Activated CD4-positive, alpha-beta T cell treated with anti-CD3 and anti-CD28 coated beads for 36 hours (primary cell): ENCODE measurements at regions of chr1 and their contacts with region 1.

Region 1: DNA sequence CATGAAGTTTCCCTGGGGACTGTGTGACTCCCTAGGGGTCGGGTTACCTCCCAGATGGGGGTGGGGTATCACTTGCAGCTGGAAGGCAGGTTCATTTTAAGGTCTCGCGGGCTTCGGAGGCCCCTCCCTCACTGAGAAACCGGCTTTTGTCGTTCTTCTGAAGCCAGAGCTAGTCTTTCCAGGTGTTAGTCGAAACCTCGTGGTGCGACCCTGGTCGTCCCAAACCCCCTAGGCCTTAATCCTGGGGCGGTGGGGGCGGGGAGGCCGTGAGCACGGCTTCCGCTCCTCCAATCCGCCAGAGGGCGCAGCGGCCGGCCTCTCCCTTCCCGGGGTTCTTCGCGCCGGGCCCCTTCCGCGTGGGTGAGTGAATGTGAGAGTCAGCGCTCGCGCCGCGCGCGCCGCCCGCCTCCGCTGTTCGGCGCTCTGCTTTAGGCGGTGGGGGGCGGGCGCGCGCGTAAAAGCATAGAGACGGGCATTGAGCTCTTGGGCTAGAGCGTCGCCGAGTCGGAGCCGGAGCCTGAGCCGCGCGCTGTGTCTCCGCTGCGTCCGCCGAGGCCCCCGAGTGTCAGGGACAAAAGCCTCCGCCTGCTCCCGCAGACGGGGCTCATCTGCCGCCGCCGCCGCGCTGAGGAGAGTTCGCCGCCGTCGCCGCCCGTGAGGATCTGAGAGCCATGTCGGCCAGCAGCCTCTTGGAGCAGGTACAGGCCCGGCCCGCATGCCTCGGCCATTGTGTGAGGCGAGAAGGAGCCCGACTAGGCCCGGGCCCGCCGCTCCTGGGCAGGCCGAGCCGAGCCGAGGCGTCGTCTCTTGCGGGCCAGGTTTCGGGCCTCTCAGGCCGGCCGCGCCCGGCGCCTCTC is at the start of gene YTHDF2:
- DNase-seq: peak; percentile 99
- ATAC-seq: peak; percentile 90
- H3K4me3 Mint-ChIP-seq: peak within 1 kb of the TSS; percentile 95
- H3K27ac Mint-ChIP-seq: peak within 1 kb of the TSS; percentile 90
- H3K4me1 Mint-ChIP-seq: peaks cover 31% of the 10 kb centered on the region
- H3K27me3 Mint-ChIP-seq: no peaks in the 10 kb centered on the region
- total RNA-seq, gene YTHDF2: 74.8 to 98.7 TPM

Region 2: GRCh38 chr1:27830621-27831424 is 905.9 kb before region 1 on chr1 and contains the start of gene PPP1R8:
- CTCF ChIA-PET with region 1: no interaction called
- POLR2A ChIA-PET with region 1: no interaction called
- intact Hi-C with region 1: loop called in 1 of 2 experiments (anchors 5 kb)
- DNase-seq: peak; percentile 94
- ATAC-seq: peak; percentile 99
- H3K4me3 Mint-ChIP-seq: peak within 1 kb of the TSS; percentile 94
- H3K27ac Mint-ChIP-seq: peak within 1 kb of the TSS; percentile 94
- H3K4me1 Mint-ChIP-seq: peaks cover 40% of the 10 kb centered on the region
- H3K27me3 Mint-ChIP-seq: no peaks in the 10 kb centered on the region
- total RNA-seq, gene PPP1R8: 49.6 to 65.9 TPM

Region 3: DNA sequence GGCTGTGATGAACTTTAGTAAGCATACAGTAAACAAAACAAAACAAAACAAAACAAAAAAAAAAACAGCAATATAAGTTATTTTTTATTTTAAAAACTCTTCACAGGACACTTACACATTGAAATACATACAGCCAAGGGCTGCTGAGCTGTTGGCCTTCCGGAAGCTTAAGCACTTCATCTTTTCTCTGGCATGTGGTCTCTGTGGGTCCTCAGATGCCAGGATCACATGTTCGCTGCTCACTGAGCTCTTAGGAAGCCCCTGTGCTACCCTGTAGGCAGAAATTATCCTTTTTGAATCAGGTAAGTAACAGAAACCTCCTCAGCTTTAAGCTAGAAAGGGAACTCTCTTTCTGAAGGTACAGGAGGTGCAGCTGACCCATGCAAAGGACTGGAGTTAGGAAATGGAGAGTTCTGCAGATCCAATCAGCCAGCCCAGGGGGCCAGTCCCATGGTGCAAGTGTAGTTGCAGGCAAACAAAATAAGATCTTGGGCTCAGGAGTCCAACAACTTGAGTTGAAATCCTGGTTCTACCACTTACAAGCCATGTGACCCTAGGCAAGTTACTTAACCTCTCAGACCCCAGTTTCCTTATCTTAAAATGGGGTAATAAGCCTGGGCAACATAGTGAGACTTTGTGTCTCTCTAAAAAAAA is 430.2 kb before region 1 on chr1:
- CTCF ChIA-PET with region 1: no interaction called
- POLR2A ChIA-PET with region 1: no interaction called
- intact Hi-C with region 1: no loop called
- DNase-seq: no peak
- ATAC-seq: no peak
- H3K4me3 Mint-ChIP-seq: no peak overlapping the region
- H3K27ac Mint-ChIP-seq: no peak overlapping the region
- H3K4me1 Mint-ChIP-seq: no peaks in the 10 kb centered on the region
- H3K27me3 Mint-ChIP-seq: no peaks in the 10 kb centered on the region

Region 4: DNA sequence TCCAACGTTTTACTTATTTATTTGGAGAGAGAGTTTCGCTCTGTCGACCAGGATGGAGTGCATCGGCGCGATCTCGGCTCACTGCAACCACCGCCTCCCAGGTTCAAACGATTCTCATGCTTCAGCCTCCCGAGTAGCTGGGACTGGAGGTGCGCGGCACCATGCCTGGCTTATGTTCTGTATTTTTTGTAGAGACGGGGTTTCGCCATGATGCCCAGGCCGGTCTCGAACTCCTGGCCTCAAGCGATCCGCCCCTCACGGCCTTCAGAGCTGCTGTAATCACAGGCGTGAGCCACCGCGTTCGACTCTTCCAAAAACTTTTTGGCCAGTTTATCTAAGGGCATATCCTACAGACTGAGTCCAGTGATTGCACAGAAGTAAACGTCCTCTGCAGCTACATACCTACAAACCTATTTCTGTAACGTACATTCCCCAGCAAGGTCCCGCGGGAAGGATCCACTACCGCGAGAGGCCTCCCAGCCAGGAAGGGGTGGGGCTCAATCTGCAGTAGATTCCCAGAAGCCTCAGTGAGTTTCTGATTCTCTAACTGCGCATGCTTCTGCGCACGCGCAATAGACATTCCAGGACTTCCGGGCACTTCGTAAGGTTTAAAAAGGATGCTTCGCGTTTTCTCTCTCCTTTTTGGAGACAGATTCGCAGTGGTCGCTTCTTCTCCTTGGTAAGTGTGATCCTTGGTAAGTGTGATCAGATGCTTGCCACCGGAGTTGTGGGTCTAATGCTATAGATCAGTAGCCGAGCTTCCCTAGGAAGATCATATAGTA is 231.1 kb before region 1 on chr1 and contains the start of gene RCC1:
- CTCF ChIA-PET with region 1: no interaction called
- POLR2A ChIA-PET with region 1: interaction called, 4 read pairs
- intact Hi-C with region 1: loop called in 1 of 2 experiments (anchors 1 kb)
- DNase-seq: peak; percentile 97
- ATAC-seq: peak; percentile 85
- H3K4me3 Mint-ChIP-seq: peak within 1 kb of the TSS; percentile 98
- H3K27ac Mint-ChIP-seq: peak within 1 kb of the TSS; percentile 99
- H3K4me1 Mint-ChIP-seq: peaks cover 26% of the 10 kb centered on the region
- H3K27me3 Mint-ChIP-seq: peaks cover 1% of the 10 kb centered on the region
- total RNA-seq, gene RCC1: 103 to 107 TPM

Region 5: GRCh38 chr1:28552758-28553663 is 183.7 kb before region 1 on chr1 and contains the start of gene TRNAU1AP:
- CTCF ChIA-PET with region 1: no interaction called
- POLR2A ChIA-PET with region 1: interaction called, 6 read pairs
- intact Hi-C with region 1: loop called in 1 of 2 experiments (anchors 1 kb)
- DNase-seq: peak; percentile 99
- ATAC-seq: peak; percentile 94
- H3K4me3 Mint-ChIP-seq: peak within 1 kb of the TSS; percentile 92
- H3K27ac Mint-ChIP-seq: peak within 1 kb of the TSS; percentile 95
- H3K4me1 Mint-ChIP-seq: peaks cover 24% of the 10 kb centered on the region
- H3K27me3 Mint-ChIP-seq: no peaks in the 10 kb centered on the region
- total RNA-seq, gene TRNAU1AP: 50.7 to 60.2 TPM

Region 6: DNA sequence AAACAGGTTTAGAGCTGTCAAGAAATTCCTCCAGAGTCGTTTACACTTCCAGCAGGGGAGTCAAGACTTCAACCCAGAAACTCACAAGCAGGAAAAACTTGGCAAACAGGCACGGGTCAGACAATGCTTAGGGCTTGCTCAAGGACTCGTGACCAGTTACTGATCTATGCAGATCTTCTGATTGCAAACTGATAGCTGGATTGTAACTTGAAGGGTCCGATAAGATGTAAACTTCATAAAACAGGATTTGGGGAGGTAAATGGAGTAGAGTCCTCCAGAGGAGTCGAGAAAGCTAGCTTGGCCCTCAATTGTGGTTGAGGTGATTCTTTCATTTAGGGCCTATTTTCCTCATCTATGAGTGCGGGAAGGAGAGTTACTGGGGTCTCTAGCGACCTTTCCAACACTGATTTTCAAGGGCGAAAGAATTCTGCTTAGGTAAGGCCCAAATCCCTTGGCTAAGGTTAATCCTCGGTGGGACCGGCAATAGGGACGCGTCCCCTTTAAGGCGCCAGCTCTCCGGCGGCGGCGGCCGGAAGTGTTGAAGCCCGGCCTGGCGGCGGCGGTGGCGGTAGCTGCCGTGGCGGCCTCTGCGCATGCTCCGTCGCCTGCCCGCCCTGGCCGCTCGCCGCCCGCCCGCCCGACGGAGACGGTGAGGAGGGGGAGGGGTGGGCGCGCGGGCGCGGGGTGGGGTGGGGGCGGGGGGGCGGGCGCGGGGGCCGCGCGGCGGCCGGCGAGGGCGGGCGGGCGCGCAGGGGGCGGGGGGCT is 68.3 kb before region 1 on chr1 and contains the start of gene GMEB1:
- CTCF ChIA-PET with region 1: interaction called, 8 read pairs
- POLR2A ChIA-PET with region 1: interaction called, 23 read pairs
- intact Hi-C with region 1: loop called (anchors 1 to 2 kb)
- DNase-seq: peak; percentile 93
- ATAC-seq: peak; percentile 72
- H3K4me3 Mint-ChIP-seq: peak within 1 kb of the TSS; percentile 84
- H3K27ac Mint-ChIP-seq: peak within 1 kb of the TSS; percentile 99
- H3K4me1 Mint-ChIP-seq: peaks cover 11% of the 10 kb centered on the region
- H3K27me3 Mint-ChIP-seq: no peaks in the 10 kb centered on the region
- total RNA-seq, gene GMEB1: 20.3 to 25.4 TPM

Region 7: GRCh38 chr1:28756846-28757245 is 20.2 kb after region 1 on chr1:
- CTCF ChIA-PET with region 1: interaction called, 10 read pairs
- POLR2A ChIA-PET with region 1: interaction called, 4 read pairs
- intact Hi-C with region 1: no loop called
- DNase-seq: no peak
- ATAC-seq: peak; percentile 33
- H3K4me3 Mint-ChIP-seq: no peak overlapping the region
- H3K27ac Mint-ChIP-seq: peak overlapping the region; percentile 44
- H3K4me1 Mint-ChIP-seq: peaks cover 26% of the 10 kb centered on the region
- H3K27me3 Mint-ChIP-seq: no peaks in the 10 kb centered on the region